GM12878 (cell line): ENCODE measurements at regions of chr19 and their contacts with region 1.

Region 1: DNA sequence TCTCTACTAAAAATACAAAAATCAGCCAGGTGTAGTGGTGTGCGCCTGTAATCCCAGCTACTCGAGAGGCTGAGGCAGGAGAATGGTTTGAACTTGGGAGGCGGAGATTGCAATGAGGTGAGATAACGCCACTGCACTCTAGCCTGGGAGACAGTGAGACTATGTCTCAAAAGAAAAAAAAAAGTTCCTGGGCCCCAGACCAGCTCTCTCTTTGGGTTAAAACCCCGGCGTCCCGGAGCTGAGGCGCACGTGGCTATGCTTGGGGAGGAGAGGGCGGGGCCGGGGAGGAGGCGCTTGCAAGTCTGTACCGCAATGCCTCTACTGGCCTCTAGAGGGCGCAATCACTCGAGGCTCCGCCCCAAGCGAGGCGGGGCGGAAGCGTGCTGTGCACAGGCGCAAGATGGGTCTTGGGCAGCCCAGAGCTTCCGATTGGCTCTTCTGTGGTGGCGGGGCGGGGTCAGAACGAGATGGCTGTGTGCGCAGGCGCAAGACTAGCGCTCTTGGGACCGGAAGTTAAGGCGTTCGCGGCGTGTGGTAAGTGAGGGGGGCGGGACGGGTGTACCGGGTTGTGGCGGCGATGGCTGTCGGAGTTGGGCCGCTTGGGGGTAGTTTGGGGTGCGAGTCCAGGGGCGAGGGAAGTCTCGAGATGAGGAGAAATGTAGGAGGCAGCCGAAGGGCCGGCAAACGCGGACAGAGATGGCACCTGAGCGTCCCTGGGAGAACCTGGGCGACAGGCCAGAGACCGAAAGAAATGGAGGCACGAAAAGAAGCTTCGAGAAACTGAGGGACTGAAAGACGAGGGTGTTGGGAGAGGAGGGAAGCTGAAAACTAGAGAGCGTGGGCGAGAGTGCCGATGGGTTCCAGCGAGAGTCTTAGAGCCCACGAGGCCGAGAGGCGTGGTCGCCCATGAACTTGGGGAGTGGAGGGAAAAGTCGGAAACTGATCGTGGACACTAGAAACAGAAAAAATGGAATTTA is at the start of gene DHX34:
- DNase-seq: peak; percentile 98
- ATAC-seq: peak; percentile 99
- H3K4me3 ChIP-seq: peak within 1 kb of the TSS; percentile 80
- H3K27ac ChIP-seq: peak within 1 kb of the TSS; percentile 76
- H3K4me1 ChIP-seq: peaks cover 7% of the 10 kb centered on the region
- H3K27me3 ChIP-seq: no peaks in the 10 kb centered on the region
- CTCF ChIP-seq: peak; percentile 96 to 99 (median 98); a peak in 5 of 6 replicates
- EP300 ChIP-seq: no peak
- POLR2A ChIP-seq: peak; percentile 94
- RAD21 ChIP-seq: no peak
- polyA plus RNA-seq, gene DHX34: 0.19 to 0.37 TPM

Region 2: DNA sequence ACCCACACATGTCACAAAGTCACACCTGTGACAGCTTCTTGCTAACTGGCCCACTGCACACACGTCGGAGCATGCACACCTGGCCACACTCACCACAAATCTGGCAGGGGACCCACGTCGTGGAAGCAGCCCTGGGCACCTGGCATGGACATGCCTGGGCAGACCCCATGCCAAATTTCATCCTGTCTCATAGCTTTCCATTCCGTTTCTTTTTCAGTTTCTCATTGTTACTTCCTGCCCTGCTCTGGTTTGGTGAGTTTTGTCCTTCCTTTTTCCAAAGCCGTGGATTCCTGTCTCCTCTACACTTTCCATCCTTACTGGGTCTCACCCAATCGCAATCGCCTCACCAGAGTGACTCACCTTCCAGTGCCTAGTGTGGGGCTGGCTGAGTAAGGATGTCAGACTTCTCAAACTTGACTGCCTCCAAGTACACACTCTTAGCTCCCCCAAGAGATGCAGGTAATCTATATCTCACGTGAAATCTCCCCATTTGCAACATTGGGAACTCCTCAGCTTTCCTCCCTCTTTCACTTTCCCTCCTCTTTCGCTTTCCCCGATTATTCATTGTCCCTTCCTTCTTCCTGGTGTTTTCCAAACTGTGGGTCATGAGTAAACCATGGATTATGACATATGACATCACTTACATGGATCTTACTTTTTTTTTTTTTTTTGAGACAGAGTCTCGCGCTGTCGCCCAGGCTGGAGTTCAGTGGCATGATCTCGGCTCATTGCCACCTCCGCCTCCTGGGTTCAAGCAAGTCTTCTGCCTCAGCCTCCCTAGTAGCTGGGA is 116.5 kb before region 1 on chr19:
- CTCF ChIA-PET with region 1: no interaction called
- POLR2A ChIA-PET with region 1: no interaction called
- RAD21 ChIA-PET with region 1: no interaction called
- SMC1A ChIA-PET with region 1: no interaction called
- in situ Hi-C with region 1: no loop called
- intact Hi-C with region 1: no loop called
- DNase-seq: no peak
- ATAC-seq: no peak; the same call in 2 of the 3 replicates
- H3K4me3 ChIP-seq: no peak overlapping the region; the same call in 1 of the 2 replicates
- H3K27ac ChIP-seq: peak overlapping the region; percentile 88
- H3K4me1 ChIP-seq: peaks cover 33% of the 10 kb centered on the region
- H3K27me3 ChIP-seq: no peaks in the 10 kb centered on the region
- CTCF ChIP-seq: no peak
- EP300 ChIP-seq: no peak
- POLR2A ChIP-seq: no peak
- RAD21 ChIP-seq: no peak

Region 3: DNA sequence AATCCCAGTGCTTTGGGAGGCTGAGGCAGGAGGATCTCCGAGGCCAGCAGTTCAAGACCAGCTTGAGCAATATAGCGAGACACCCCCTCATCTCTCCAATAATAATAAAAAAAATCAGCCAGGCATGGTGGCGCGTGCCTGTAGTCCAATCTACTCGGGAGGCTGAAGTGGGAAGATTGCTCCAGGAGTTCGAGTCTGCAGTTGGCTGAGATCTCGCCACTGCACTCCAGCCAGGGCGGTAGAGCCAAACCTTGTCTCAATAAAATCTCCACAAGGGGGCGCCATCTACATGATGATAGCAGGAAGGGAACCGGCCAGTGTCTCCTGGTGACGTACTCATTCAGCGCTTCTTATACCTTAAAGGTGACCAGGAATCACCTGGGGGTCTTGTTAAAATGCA is 53.1 kb before region 1 on chr19:
- CTCF ChIA-PET with region 1: interaction called, 42 read pairs
- POLR2A ChIA-PET with region 1: interaction called, 4 read pairs
- RAD21 ChIA-PET with region 1: interaction called, 8 read pairs
- SMC1A ChIA-PET with region 1: interaction called, 4 read pairs
- in situ Hi-C with region 1: no loop called
- intact Hi-C with region 1: loop called (anchors 2 kb)
- DNase-seq: no peak
- ATAC-seq: peak; percentile 94
- H3K4me3 ChIP-seq: no peak overlapping the region
- H3K27ac ChIP-seq: no peak overlapping the region
- H3K4me1 ChIP-seq: peaks cover 12% of the 10 kb centered on the region
- H3K27me3 ChIP-seq: no peaks in the 10 kb centered on the region
- CTCF ChIP-seq: peak; percentile 66 to 86 (median 69)
- EP300 ChIP-seq: no peak
- POLR2A ChIP-seq: no peak
- RAD21 ChIP-seq: peak; percentile 89

Region 4: DNA sequence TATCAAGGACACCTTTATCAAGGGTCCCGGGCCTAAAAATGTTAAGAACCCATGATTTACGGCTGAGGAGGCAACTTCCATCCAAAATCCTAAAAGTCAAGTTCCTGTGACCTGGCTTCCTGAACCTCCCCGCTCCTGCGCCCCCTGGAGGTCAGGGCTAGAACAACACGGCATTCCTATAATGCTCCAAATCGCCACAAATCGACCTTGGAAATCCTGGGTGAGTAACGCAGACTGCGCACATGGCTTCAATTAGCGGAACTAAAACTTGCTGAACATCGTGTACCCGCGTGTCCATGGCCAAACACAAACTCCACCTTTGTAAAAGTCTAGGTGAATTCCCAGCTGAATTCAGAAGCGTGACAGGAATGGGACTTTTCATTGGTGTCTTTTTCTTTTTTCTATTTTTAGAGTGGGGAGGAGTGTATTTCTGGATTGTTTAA is 43.8 kb before region 1 on chr19:
- CTCF ChIA-PET with region 1: interaction called, 42 read pairs
- POLR2A ChIA-PET with region 1: interaction called, 3 read pairs
- RAD21 ChIA-PET with region 1: interaction called, 7 read pairs
- SMC1A ChIA-PET with region 1: interaction called, 4 read pairs
- in situ Hi-C with region 1: no loop called
- intact Hi-C with region 1: no loop called
- DNase-seq: peak; percentile 62
- ATAC-seq: peak; percentile 65
- H3K4me3 ChIP-seq: no peak overlapping the region
- H3K27ac ChIP-seq: no peak overlapping the region
- H3K4me1 ChIP-seq: peaks cover 7% of the 10 kb centered on the region
- H3K27me3 ChIP-seq: no peaks in the 10 kb centered on the region
- CTCF ChIP-seq: peak; percentile 77 to 97 (median 97)
- EP300 ChIP-seq: 0 out of 4 replicates have a peak, but pooled peaks of 1 of the 2 experiments have one; percentile 31
- POLR2A ChIP-seq: no peak
- RAD21 ChIP-seq: no peak

Region 5: GRCh38 chr19:47315125-47315821 is 33.8 kb before region 1 on chr19:
- CTCF ChIA-PET with region 1: interaction called, 20 read pairs
- POLR2A ChIA-PET with region 1: interaction called, 4 read pairs
- RAD21 ChIA-PET with region 1: no interaction called
- SMC1A ChIA-PET with region 1: interaction called, 3 read pairs
- in situ Hi-C with region 1: no loop called
- intact Hi-C with region 1: no loop called
- DNase-seq: no peak
- ATAC-seq: peak; percentile 82
- H3K4me3 ChIP-seq: no peak overlapping the region
- H3K27ac ChIP-seq: no peak overlapping the region
- H3K4me1 ChIP-seq: no peaks in the 10 kb centered on the region
- H3K27me3 ChIP-seq: no peaks in the 10 kb centered on the region
- CTCF ChIP-seq: no peak
- EP300 ChIP-seq: no peak
- POLR2A ChIP-seq: no peak
- RAD21 ChIP-seq: no peak

Region 6: GRCh38 chr19:47336853-47337279 is 12.2 kb before region 1 on chr19:
- CTCF ChIA-PET with region 1: interaction called, 21 read pairs
- POLR2A ChIA-PET with region 1: interaction called, 4 read pairs
- RAD21 ChIA-PET with region 1: no interaction called
- SMC1A ChIA-PET with region 1: no interaction called
- in situ Hi-C with region 1: no loop called
- intact Hi-C with region 1: no loop called
- DNase-seq: no peak
- ATAC-seq: peak; percentile 57
- H3K4me3 ChIP-seq: no peak overlapping the region
- H3K27ac ChIP-seq: no peak overlapping the region
- H3K4me1 ChIP-seq: no peaks in the 10 kb centered on the region
- H3K27me3 ChIP-seq: no peaks in the 10 kb centered on the region
- CTCF ChIP-seq: no peak
- EP300 ChIP-seq: no peak
- POLR2A ChIP-seq: no peak
- RAD21 ChIP-seq: no peak

Region 7: GRCh38 chr19:47391510-47392223 is 42.6 kb after region 1 on chr19:
- CTCF ChIA-PET with region 1: interaction called, 15 read pairs
- POLR2A ChIA-PET with region 1: no interaction called
- RAD21 ChIA-PET with region 1: interaction called, 4 read pairs
- SMC1A ChIA-PET with region 1: interaction called, 6 read pairs
- in situ Hi-C with region 1: no loop called
- intact Hi-C with region 1: loop called (anchors 5 kb)
- DNase-seq: peak; percentile 12
- ATAC-seq: peak; percentile 98
- H3K4me3 ChIP-seq: no peak overlapping the region
- H3K27ac ChIP-seq: no peak overlapping the region; the same call in 1 of the 2 replicates
- H3K4me1 ChIP-seq: no peaks in the 10 kb centered on the region
- H3K27me3 ChIP-seq: no peaks in the 10 kb centered on the region
- CTCF ChIP-seq: peak; percentile 86 to 92 (median 88)
- EP300 ChIP-seq: no peak
- POLR2A ChIP-seq: no peak
- RAD21 ChIP-seq: peak; percentile 73